Panc1 (cell line): ENCODE measurements at regions of chr15 and their contacts with region 1.

Region 1: DNA sequence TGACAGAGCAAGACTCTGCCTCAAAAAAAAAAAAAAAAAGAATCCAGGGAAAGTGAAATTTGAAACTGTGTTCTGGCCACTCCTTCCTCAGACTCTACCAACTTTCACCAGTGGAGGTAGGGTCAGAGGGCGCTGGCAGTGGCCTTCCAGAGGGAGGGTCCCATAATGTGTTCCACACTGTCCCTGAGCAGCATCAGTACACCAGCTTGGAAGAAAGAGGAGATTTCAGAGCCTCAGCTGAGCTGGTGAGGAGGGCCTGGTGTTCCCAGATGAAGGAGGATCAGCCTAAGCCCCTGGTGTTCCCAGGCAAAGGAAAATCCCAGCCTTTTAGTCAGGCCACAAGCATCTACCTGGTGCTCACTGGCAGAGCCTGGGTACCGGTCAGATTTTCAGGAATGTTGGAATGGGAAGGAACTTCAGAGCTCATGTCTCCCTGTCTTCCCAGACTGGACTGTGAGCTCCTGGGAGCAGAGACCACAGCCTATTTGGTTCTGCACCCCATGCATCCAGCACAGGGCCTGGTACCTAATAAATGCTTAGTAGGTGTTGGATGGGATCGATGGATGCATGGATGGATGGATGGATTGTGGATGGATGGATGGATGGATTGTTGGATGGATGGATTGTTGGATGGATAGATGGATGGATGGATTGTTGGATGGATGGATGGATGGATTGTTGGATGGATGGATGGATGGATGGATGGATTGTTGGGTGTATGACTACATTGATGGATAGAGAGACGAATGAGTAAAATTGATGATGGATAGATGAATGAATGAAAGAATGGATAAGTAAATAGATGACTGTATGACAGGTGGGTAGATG is 118.0 kb downstream of the CORO2B start:
- DNase-seq: no peak
- ATAC-seq: no peak
- H3K4me3 ChIP-seq: no peak overlapping the region
- H3K27ac ChIP-seq: no peak overlapping the region
- H3K4me1 ChIP-seq: no peaks in the 10 kb centered on the region
- H3K27me3 ChIP-seq: no peaks in the 10 kb centered on the region
- CTCF ChIP-seq: no peak

Region 2: GRCh38 chr15:68517285-68517761 is 179.4 kb before region 1 on chr15:
- CTCF ChIA-PET with region 1: no interaction called
- POLR2A ChIA-PET with region 1: interaction called, 13 read pairs
- in situ Hi-C with region 1: no loop called
- intact Hi-C with region 1: no loop called
- DNase-seq: no peak
- ATAC-seq: peak; percentile 51; the same call in 1 of the 2 replicates
- H3K4me3 ChIP-seq: no peak overlapping the region
- H3K27ac ChIP-seq: no peak overlapping the region
- H3K4me1 ChIP-seq: no peaks in the 10 kb centered on the region
- H3K27me3 ChIP-seq: peaks cover 16% of the 10 kb centered on the region; the same call in 1 of the 2 replicates
- CTCF ChIP-seq: no peak